Activated CD4-positive, alpha-beta memory T cell treated with anti-CD3 and anti-CD28 coated beads for 36 hours (primary cell): ENCODE measurements at regions of chr17 and their contacts with region 1.

Region 1: GRCh38 chr17:74790161-74791054 is 14.3 kb upstream of the NAT9 start:
- DNase-seq: no peak
- H3K4me3 Mint-ChIP-seq: no peak overlapping the region
- H3K27ac Mint-ChIP-seq: peak overlapping the region; percentile 57
- H3K4me1 Mint-ChIP-seq: peaks cover 31% of the 10 kb centered on the region
- H3K27me3 Mint-ChIP-seq: no peaks in the 10 kb centered on the region

Region 2: GRCh38 chr17:74623693-74624093 is 166.7 kb before region 1 on chr17 and contains the start of gene CD300E:
- CTCF ChIA-PET with region 1: no interaction called
- POLR2A ChIA-PET with region 1: no interaction called
- intact Hi-C with region 1: no loop called
- DNase-seq: no peak
- H3K4me3 Mint-ChIP-seq: no peak within 1 kb of the TSS
- H3K27ac Mint-ChIP-seq: no peak within 1 kb of the TSS
- H3K4me1 Mint-ChIP-seq: no peaks in the 10 kb centered on the region
- H3K27me3 Mint-ChIP-seq: peaks cover 34% of the 10 kb centered on the region
- total RNA-seq, gene CD300E: not detected

Region 3: DNA sequence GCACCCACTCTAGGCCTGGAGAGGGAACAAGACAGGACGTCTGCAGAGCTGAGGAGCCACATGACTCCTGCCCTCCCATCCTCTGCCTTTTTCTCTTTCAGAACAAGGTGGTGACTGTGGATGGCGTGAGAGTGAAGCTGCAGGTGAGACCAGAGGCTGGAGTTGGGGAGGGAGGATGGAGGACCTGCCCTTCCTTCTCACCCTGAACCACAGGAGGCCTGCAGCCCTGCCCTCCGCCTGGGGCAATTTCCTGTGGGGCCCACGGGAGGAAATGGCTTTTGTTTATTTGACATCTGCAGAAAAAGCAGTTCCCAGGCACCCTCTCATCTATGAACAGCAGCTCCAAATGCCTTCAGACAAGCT is 48.3 kb before region 1 on chr17:
- CTCF ChIA-PET with region 1: interaction called, 52 read pairs
- POLR2A ChIA-PET with region 1: no interaction called
- intact Hi-C with region 1: no loop called
- DNase-seq: peak; percentile 79
- H3K4me3 Mint-ChIP-seq: peak overlapping the region; percentile 38
- H3K27ac Mint-ChIP-seq: peak overlapping the region; percentile 88
- H3K4me1 Mint-ChIP-seq: peaks cover 79% of the 10 kb centered on the region
- H3K27me3 Mint-ChIP-seq: no peaks in the 10 kb centered on the region

Region 4: DNA sequence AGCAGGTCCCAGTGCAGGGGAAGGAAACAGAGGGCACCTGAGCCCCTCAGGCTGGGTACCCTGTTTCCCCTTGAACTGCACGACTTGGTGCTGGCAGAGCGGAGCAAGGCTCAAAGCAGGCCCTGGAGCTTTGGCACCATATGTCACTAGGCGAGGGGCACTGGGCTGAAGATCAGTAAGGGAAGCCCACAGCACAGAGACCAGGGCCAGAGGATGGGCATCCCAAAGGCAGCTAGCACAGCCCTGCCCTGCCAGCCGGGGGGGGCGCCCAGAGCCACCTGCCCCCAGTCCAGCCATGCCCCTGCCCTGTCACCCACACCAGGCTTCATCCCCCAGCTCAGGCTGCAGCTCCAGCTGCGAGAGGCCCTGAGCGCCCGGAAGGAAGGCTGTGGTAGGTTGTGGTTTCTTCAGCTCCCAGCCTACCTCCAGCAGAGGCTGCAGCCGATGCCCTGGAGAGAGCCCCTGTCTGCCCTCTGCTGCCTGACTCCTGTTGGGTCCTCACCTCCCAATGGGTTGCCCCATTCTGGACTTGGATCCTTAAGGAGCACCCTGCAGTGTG is 31.1 kb before region 1 on chr17:
- CTCF ChIA-PET with region 1: interaction called, 36 read pairs
- POLR2A ChIA-PET with region 1: no interaction called
- intact Hi-C with region 1: no loop called
- DNase-seq: peak; percentile 73
- H3K4me3 Mint-ChIP-seq: peak overlapping the region; percentile 23
- H3K27ac Mint-ChIP-seq: peak overlapping the region; percentile 85
- H3K4me1 Mint-ChIP-seq: peaks cover 69% of the 10 kb centered on the region
- H3K27me3 Mint-ChIP-seq: no peaks in the 10 kb centered on the region

Region 5: GRCh38 chr17:74776044-74776977 is 14.1 kb before region 1 on chr17 and contains the start of gene NAT9:
- CTCF ChIA-PET with region 1: interaction called, 60 read pairs
- POLR2A ChIA-PET with region 1: interaction called, 3 read pairs
- intact Hi-C with region 1: loop called (anchors 1 kb)
- DNase-seq: peak; percentile 99
- H3K4me3 Mint-ChIP-seq: peak within 1 kb of the TSS; percentile 97
- H3K27ac Mint-ChIP-seq: peak within 1 kb of the TSS; percentile 89
- H3K4me1 Mint-ChIP-seq: peaks cover 71% of the 10 kb centered on the region
- H3K27me3 Mint-ChIP-seq: no peaks in the 10 kb centered on the region
- total RNA-seq, gene NAT9: 42.9 to 46.9 TPM

Region 6: DNA sequence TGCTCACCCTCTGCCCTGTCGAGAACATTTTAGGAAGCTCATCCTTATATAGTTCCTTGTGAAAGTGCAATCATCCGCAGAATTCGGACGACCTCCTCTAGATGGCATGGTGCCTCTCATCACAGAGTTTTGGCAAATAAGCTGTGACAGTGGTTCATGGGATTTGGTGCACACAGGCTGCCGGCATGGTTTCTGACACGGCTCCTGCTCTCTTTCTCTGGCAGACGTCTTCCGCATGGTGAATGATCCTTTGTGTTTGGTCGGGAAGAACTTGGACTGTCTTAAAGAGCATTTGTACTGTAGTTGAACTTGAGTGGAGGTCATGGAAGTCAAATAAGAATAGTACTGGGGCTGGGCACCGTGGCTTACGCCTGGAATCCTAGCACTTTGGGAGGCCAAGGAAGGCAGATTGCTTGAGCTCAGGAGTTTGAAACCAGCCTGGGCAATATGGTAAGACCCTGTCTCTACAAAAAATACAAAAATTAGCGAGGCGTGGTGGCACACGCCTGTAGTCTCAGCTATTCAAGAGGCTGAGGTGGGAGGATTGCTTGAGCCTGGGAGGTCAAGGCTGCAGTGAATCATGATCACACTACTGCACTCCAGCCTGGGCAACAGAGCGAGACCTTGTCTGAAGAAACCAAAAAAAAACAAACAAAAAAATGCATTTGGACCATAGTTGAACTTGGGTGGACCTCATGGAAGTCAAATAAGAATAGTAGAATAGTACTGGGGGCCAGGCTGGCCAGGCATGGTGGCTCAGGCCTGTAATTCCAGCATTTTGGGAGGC is 20.5 kb after region 1 on chr17:
- CTCF ChIA-PET with region 1: interaction called, 10 read pairs
- POLR2A ChIA-PET with region 1: no interaction called
- intact Hi-C with region 1: no loop called
- DNase-seq: no peak
- H3K4me3 Mint-ChIP-seq: no peak overlapping the region
- H3K27ac Mint-ChIP-seq: no peak overlapping the region
- H3K4me1 Mint-ChIP-seq: no peaks in the 10 kb centered on the region
- H3K27me3 Mint-ChIP-seq: no peaks in the 10 kb centered on the region

Region 7: GRCh38 chr17:74864866-74865395 is 74.5 kb after region 1 on chr17:
- CTCF ChIA-PET with region 1: interaction called, 52 read pairs
- POLR2A ChIA-PET with region 1: no interaction called
- intact Hi-C with region 1: loop called (anchors 1 kb)
- DNase-seq: peak; percentile 81
- H3K4me3 Mint-ChIP-seq: no peak overlapping the region
- H3K27ac Mint-ChIP-seq: no peak overlapping the region
- H3K4me1 Mint-ChIP-seq: peaks cover 12% of the 10 kb centered on the region
- H3K27me3 Mint-ChIP-seq: peaks cover 16% of the 10 kb centered on the region

Region 8: DNA sequence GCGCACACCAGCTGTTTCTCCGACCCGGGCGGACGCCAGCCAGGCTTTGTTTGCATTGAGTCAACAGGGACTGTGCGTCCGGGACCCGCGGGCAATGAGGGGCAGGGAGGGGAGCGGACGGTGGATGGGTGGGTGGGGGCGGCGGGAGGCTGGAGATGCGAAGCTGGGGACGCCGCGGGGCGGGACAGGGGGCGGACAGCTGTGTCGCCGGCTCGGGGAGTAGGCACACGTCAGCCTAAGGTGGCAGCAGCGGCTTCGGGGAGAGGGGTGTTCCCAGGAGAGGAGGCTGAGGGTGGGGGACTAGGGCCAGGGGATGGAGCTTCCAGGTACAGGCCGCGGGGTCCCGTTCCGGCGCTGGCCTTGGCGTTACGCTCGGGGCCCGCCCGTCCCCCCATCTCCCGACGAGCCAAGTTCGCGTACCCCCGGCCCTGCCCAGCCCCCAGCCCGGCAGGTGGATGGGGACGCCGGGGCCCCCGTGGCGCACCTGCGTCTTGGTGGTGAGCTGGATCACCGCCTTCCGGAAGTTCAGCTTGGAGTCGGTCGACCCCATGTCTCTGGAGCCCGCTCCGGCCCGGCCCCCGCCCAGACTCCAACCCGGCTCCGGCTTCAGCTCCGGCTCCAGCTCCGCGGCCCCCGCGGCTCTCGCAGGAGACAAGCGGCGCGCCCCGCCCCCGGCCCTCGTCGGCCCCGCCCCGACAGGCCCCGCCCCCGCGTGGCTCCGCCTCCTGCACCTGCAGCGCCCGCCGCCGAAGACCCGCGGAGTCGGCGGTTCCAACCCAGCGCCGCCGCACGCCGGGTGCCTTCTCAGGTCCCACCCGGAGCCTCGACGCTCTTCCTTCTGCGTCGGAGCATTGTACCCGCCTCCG is 181.9 kb after region 1 on chr17 and contains the start of gene HID1:
- CTCF ChIA-PET with region 1: no interaction called
- POLR2A ChIA-PET with region 1: no interaction called
- intact Hi-C with region 1: no loop called
- DNase-seq: peak; percentile 82
- H3K4me3 Mint-ChIP-seq: peak within 1 kb of the TSS; percentile 73
- H3K27ac Mint-ChIP-seq: no peak within 1 kb of the TSS
- H3K4me1 Mint-ChIP-seq: peaks cover 5% of the 10 kb centered on the region
- H3K27me3 Mint-ChIP-seq: peaks cover 10% of the 10 kb centered on the region
- total RNA-seq, gene HID1: 2.3 to 2.6 TPM